Activated naive CD4-positive, alpha-beta T cell treated with anti-CD3 and anti-CD28 coated beads, Interleukin-2, amount 10 ng/mL, durations not matched to agents 7 days and 5 days (primary cell): ENCODE measurements at regions of chr10 and their contacts with region 1.

Region 1: GRCh38 chr10:122279725-122280141 is 8.6 kb downstream of the BTBD16 start:
- DNase-seq: peak; percentile 42
- H3K4me3 Mint-ChIP-seq: no peak overlapping the region
- H3K27ac Mint-ChIP-seq: no peak overlapping the region
- H3K4me1 Mint-ChIP-seq: no peaks in the 10 kb centered on the region
- H3K27me3 Mint-ChIP-seq: peaks cover 36% of the 10 kb centered on the region

Region 2: GRCh38 chr10:122267849-122268737 is 11.6 kb before region 1 on chr10:
- CTCF ChIA-PET with region 1: interaction called, 12 read pairs
- DNase-seq: peak; percentile 61
- H3K4me3 Mint-ChIP-seq: no peak overlapping the region
- H3K27ac Mint-ChIP-seq: no peak overlapping the region
- H3K4me1 Mint-ChIP-seq: no peaks in the 10 kb centered on the region
- H3K27me3 Mint-ChIP-seq: peaks cover 4% of the 10 kb centered on the region

Region 3: DNA sequence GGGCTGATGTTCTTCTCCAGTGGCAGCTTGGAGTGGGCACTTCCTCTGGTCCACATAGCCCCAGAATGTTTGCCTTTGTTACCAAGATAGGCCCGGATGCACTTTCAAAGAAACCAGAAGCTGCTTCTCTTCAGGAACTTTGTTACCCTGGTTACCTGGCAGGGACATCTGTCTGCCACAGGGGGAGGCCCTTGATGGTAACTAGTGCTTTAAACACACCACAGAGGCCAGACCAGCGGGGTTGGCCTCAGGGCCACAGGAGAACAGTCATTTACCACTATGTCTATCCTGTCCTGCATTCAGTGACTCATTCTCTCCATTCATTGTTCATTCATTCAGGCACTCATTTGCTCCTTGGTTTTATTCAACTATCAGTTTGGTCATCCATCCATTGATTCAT is 82.9 kb after region 1 on chr10:
- CTCF ChIA-PET with region 1: no interaction called
- DNase-seq: no peak
- H3K4me3 Mint-ChIP-seq: no peak overlapping the region
- H3K27ac Mint-ChIP-seq: no peak overlapping the region
- H3K4me1 Mint-ChIP-seq: no peaks in the 10 kb centered on the region
- H3K27me3 Mint-ChIP-seq: peaks cover 28% of the 10 kb centered on the region